Left ventricle myocardium superior (tissue), 1 donor: ENCODE measurements at regions of chr6 and their contacts with region 1.

Region 1: DNA sequence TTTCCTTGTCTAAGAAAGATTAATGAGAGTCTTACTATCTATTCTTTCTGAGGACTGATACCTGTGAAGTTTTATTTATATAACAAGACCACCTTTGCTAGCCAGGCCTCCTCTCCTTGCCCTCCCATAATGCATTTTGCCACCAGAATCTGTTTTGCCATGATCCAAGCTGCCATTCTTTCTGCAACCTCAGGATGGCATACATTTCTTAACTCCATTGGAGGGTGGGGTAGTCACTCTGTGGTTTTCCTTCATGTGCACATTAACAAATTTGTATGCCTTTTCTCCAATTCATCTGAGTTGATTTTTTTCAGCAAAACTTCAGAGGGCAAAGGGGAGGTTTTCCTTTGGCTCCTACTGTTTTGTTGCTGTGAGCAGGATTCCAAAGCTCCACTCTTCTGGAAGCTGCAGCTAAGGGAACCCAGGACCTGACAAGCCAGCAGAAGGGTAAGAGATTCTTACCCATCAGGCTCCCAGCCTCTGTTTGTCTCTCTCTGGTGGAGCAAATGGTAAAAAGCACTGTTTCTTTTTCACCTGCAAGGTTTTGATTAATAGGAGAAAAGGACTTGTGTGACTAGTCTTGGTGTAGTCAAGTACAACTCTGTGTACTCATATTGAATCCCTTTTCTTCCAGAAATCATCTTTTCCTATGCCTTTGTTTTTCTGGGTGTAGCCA is 26.2 kb upstream of the ENPP4 start:
- DNase-seq: no peak
- ATAC-seq: no peak

Region 2: GRCh38 chr6:46203391-46204177 is 100.0 kb after region 1 on chr6:
- intact Hi-C with region 1: loop called (anchors 10 kb)
- DNase-seq: no peak
- ATAC-seq: no peak